H1 (cell line): ENCODE measurements at regions of chr3 and their contacts with region 1.

Region 1: GRCh38 chr3:196202516-196202970 is 8.7 kb downstream of the ZDHHC19 start:
- DNase-seq: no peak
- H3K4me3 ChIP-seq: no peak overlapping the region
- H3K27ac ChIP-seq: no peak overlapping the region
- H3K4me1 ChIP-seq: peaks cover 0 to 6% (median 0%) of the 10 kb centered on the region in 4 experiments; a peak in 2 of 7 replicates
- H3K27me3 ChIP-seq: peaks cover 0 to 7% (median 6%) of the 10 kb centered on the region in 4 experiments; a peak in 5 of 7 replicates
- CTCF ChIP-seq: no peak
- EP300 ChIP-seq: no peak
- POLR2A ChIP-seq: no peak
- RAD21 ChIP-seq: no peak

Region 2: GRCh38 chr3:196023947-196024346 is 178.6 kb before region 1 on chr3:
- CTCF ChIA-PET with region 1: interaction called, 18 read pairs
- POLR2A ChIA-PET with region 1: no interaction called
- DNase-seq: no peak
- H3K4me3 ChIP-seq: no peak overlapping the region
- H3K27ac ChIP-seq: no peak overlapping the region
- H3K4me1 ChIP-seq: no peaks in the 10 kb centered on the region
- H3K27me3 ChIP-seq: no peaks in the 10 kb centered on the region
- CTCF ChIP-seq: no peak
- EP300 ChIP-seq: no peak
- POLR2A ChIP-seq: no peak
- RAD21 ChIP-seq: no peak

Region 3: GRCh38 chr3:196073188-196073838 is 129.2 kb before region 1 on chr3:
- CTCF ChIA-PET with region 1: interaction called, 299 read pairs
- POLR2A ChIA-PET with region 1: interaction called, 3 read pairs
- DNase-seq: peak in 1 of 2 experiments; percentile 69
- H3K4me3 ChIP-seq: no peak overlapping the region
- H3K27ac ChIP-seq: no peak overlapping the region
- H3K4me1 ChIP-seq: no peaks in the 10 kb centered on the region
- H3K27me3 ChIP-seq: no peaks in the 10 kb centered on the region
- CTCF ChIP-seq: peak; percentile 81 to 87 (median 85)
- EP300 ChIP-seq: no peak
- POLR2A ChIP-seq: no peak
- RAD21 ChIP-seq: peak; percentile 93 to 94

Region 4: GRCh38 chr3:196108083-196108743 is 94.3 kb before region 1 on chr3:
- CTCF ChIA-PET with region 1: interaction called, 24 read pairs
- POLR2A ChIA-PET with region 1: no interaction called
- DNase-seq: peak; percentile 39 to 64
- H3K4me3 ChIP-seq: no peak overlapping the region
- H3K27ac ChIP-seq: no peak overlapping the region
- H3K4me1 ChIP-seq: peaks cover 0 to 10% (median 6%) of the 10 kb centered on the region in 4 experiments; a peak in 5 of 7 replicates
- H3K27me3 ChIP-seq: no peaks in the 10 kb centered on the region
- CTCF ChIP-seq: peak in 1 of 3 experiments; percentile 0; a peak in 1 of 4 replicates
- EP300 ChIP-seq: no peak
- POLR2A ChIP-seq: no peak
- RAD21 ChIP-seq: no peak

Region 5: DNA sequence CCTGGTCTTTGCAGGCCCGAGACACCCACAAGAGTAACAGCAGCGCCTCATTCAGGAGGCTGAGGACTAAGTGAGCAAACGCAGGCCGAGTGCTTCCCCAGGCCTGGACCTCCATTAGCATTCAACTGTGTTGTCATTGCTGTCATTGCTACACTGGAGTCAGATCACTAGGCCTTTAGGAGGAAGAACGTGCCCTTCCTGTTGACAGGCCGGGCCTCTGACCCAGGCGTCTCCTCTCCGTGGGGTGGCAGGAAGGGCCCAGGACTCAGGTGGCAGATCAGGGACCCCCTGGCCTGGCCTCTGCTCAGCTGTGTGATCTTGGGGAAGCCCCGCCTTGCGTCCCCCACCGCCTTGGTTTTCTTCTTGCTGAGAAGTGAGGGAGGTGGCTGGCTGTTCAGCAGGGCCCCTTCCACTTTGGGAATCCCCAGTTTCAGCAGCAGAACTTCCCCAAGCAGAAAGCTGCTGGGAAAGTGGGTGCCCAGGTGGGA is 10.5 kb before region 1 on chr3:
- CTCF ChIA-PET with region 1: interaction called, 28 read pairs
- POLR2A ChIA-PET with region 1: interaction called, 3 read pairs
- DNase-seq: no peak
- H3K4me3 ChIP-seq: no peak overlapping the region
- H3K27ac ChIP-seq: no peak overlapping the region
- H3K4me1 ChIP-seq: peaks cover 0 to 9% (median 3%) of the 10 kb centered on the region in 4 experiments; a peak in 5 of 7 replicates
- H3K27me3 ChIP-seq: no peaks in the 10 kb centered on the region
- CTCF ChIP-seq: no peak
- EP300 ChIP-seq: no peak
- POLR2A ChIP-seq: no peak
- RAD21 ChIP-seq: peak; percentile 23 to 44; a peak in 2 of 4 replicates

Region 6: DNA sequence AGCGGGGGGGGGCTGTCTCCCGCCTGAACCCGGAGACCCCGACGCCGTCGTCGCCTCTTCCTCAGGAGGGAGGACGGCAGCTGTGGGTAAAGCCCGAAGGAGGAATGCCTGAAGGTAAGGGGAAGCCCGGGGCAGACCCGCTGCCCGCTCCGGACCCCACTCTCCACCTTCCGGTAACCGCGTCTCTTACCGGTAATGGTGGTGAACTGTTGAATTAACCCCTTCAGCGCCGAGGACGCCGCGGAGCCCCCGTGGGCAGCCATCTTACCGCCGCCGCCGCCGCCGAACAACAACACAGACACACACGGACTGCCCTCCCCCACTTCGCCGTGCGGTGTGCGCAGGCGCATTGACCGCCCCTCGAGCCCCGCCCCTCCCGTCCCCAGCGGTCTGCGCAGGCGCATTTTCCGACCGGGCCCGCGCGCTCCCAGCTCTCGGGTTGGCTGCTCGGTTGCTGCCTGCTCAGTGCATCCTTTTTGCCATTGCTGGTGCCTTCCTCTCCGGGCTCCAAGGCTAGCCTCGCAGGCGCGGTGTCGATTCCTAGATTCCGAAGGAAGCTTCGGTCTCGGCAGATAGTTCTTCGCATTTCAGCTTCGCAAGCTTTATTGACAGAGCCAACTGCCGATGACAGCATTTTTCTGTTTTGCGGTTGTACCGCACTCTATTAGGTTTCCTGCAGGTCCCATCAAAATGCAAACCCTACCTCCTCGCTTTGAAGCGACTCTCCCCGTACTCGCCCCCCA is 229.8 kb after region 1 on chr3 and contains the start of gene UBXN7:
- CTCF ChIA-PET with region 1: no interaction called
- POLR2A ChIA-PET with region 1: no interaction called
- DNase-seq: peak; percentile 89 to 98
- H3K4me3 ChIP-seq: peak within 1 kb of the TSS; percentile 88 to 99 (median 95)
- H3K27ac ChIP-seq: peak within 1 kb of the TSS; percentile 87
- H3K4me1 ChIP-seq: peaks cover 0 to 3% (median under 1%) of the 10 kb centered on the region in 4 experiments; a peak in 3 of 7 replicates
- H3K27me3 ChIP-seq: no peaks in the 10 kb centered on the region
- CTCF ChIP-seq: no peak
- EP300 ChIP-seq: peak in 1 of 2 experiments; percentile 84; a peak in 2 of 3 replicates
- POLR2A ChIP-seq: peak; percentile 78 to 89
- RAD21 ChIP-seq: no peak
- total RNA-seq, gene UBXN7: 109 and 122 TPM in 2 replicates